Panc1 (cell line): ENCODE measurements at regions of chr1 and their contacts with region 1.

Region 1: GRCh38 chr1:94672934-94673333 is 131.4 kb upstream of the F3 start:
- DNase-seq: no peak
- ATAC-seq: no peak
- H3K4me3 ChIP-seq: no peak overlapping the region
- H3K27ac ChIP-seq: no peak overlapping the region
- H3K4me1 ChIP-seq: no peaks in the 10 kb centered on the region
- H3K27me3 ChIP-seq: no peaks in the 10 kb centered on the region
- CTCF ChIP-seq: no peak

Region 2: DNA sequence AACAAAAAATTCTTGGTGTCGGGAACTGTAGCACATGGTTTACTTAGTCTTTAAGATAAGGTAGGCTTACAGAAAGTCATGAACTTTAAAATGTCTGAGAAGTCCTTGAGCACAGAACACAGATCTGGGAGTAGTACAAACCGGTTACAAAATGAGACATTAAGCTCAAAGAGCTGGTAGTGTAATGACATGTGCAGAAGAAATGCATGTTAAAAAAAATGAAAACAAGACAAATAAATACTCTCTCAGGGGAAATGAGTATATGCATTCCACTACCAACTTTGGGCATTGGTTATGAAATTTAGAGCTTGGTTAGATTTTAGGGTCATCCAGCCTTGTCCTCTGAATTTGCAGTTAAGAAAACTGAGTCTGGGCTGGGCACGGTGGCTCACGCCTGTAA is 39.9 kb before region 1 on chr1:
- CTCF ChIA-PET with region 1: no interaction called
- POLR2A ChIA-PET with region 1: no interaction called
- in situ Hi-C with region 1: no loop called
- intact Hi-C with region 1: loop called (anchors 2 kb)
- DNase-seq: no peak
- ATAC-seq: no peak
- H3K4me3 ChIP-seq: no peak overlapping the region
- H3K27ac ChIP-seq: no peak overlapping the region
- H3K4me1 ChIP-seq: no peaks in the 10 kb centered on the region
- H3K27me3 ChIP-seq: no peaks in the 10 kb centered on the region
- CTCF ChIP-seq: no peak

Region 3: GRCh38 chr1:94773931-94774422 is 101.0 kb after region 1 on chr1:
- CTCF ChIA-PET with region 1: no interaction called
- POLR2A ChIA-PET with region 1: no interaction called
- in situ Hi-C with region 1: no loop called
- intact Hi-C with region 1: no loop called
- DNase-seq: no peak
- ATAC-seq: no peak
- H3K4me3 ChIP-seq: no peak overlapping the region
- H3K27ac ChIP-seq: no peak overlapping the region
- H3K4me1 ChIP-seq: no peaks in the 10 kb centered on the region
- H3K27me3 ChIP-seq: no peaks in the 10 kb centered on the region
- CTCF ChIP-seq: no peak